ENCODE measurements at regions of chr5 and their contacts with region 1.

Region 1: GRCh38 chr5:119290161-119290569 is 65.7 kb upstream of the TNFAIP8 start:
- DNase-seq: no peak
- H3K4me3 Mint-ChIP-seq: peak overlapping the region; percentile 28
- H3K27ac Mint-ChIP-seq: peak overlapping the region; percentile 93
- H3K4me1 Mint-ChIP-seq: peaks cover 86% of the 10 kb centered on the region
- H3K27me3 Mint-ChIP-seq: no peaks in the 10 kb centered on the region

Region 2: DNA sequence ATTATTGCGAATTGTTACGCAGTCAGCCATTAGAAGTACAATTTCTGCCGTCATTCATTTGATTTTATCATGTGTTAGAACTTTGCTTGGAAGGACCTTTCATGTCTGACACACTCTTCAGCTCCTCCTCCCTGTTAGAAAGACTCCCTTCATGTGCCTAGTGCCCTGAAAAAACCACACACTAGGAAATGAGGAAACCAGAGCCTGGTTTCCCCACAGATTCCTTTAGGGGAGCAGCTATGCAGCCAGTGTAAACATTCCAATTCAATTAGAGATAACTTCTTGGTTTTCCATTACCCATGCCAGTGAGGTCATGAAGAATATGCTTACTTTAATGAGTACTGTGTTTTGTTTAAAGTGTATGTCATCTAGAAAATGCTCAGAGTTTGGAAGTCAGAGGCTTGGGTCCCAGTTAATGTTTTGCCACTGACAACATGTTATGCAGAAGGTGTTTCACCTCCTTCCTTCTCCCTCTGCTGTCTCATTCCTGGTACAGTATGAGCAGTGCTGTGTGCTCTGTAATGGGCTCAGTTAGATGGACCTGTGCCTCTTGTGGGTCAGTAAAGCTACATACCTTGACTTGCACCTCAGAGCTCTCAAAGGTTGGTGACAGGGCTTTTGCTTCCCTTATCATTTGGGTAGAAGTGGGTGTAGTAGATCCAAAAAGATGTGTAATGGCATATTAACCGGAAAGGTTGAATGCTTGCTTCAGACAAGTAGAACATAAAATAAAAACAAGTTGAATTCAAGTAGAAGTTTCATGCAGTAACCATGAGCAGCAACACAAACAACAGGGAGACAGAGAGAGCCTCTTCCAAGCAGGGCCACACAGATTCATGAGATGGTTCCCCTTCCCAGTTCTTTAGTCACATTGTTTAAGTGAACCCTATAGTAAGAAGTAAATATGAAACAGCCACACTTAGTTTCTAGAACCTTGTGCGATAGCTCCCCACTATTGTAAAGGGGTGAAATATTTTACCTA is 13.0 kb after region 1 on chr5:
- CTCF ChIA-PET with region 1: interaction called, 8 read pairs
- POLR2A ChIA-PET with region 1: interaction called, 10 read pairs
- intact Hi-C with region 1: loop called (anchors 1 kb)
- DNase-seq: no peak
- H3K4me3 Mint-ChIP-seq: peak overlapping the region; percentile 17
- H3K27ac Mint-ChIP-seq: peak overlapping the region; percentile 90
- H3K4me1 Mint-ChIP-seq: peaks cover 93% of the 10 kb centered on the region
- H3K27me3 Mint-ChIP-seq: no peaks in the 10 kb centered on the region

Region 3: DNA sequence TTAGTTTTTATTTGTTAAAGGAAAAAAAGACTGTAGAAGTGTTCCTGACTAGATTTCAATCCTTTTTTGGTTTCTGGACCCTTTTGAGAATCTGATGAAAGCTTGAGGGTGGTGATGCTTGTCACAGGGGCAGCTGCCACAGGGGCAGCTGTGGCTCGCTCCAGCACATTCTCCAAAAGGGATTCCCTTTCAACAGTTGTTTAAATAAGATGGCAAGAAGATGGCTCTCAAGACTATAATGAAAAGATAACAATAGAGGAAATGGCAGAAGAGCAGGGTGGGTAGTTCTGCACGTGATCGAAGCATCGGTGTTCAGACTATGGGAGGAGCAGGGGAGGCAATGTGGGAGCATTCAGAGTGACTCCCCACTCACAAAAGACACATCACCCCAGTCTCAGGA is 19.2 kb after region 1 on chr5:
- CTCF ChIA-PET with region 1: interaction called, 5 read pairs
- POLR2A ChIA-PET with region 1: no interaction called
- intact Hi-C with region 1: loop called (anchors 1 kb)
- DNase-seq: no peak
- H3K4me3 Mint-ChIP-seq: peak overlapping the region; percentile 43
- H3K27ac Mint-ChIP-seq: peak overlapping the region; percentile 90
- H3K4me1 Mint-ChIP-seq: peaks cover 94% of the 10 kb centered on the region
- H3K27me3 Mint-ChIP-seq: no peaks in the 10 kb centered on the region

Measured in activated CD4-positive, alpha-beta memory T cell treated with anti-CD3 and anti-CD28 coated beads for 36 hours (primary cell).